Motor neuron (in vitro differentiated cells): ENCODE measurements at regions of chr17 and their contacts with region 1.

Region 1: DNA sequence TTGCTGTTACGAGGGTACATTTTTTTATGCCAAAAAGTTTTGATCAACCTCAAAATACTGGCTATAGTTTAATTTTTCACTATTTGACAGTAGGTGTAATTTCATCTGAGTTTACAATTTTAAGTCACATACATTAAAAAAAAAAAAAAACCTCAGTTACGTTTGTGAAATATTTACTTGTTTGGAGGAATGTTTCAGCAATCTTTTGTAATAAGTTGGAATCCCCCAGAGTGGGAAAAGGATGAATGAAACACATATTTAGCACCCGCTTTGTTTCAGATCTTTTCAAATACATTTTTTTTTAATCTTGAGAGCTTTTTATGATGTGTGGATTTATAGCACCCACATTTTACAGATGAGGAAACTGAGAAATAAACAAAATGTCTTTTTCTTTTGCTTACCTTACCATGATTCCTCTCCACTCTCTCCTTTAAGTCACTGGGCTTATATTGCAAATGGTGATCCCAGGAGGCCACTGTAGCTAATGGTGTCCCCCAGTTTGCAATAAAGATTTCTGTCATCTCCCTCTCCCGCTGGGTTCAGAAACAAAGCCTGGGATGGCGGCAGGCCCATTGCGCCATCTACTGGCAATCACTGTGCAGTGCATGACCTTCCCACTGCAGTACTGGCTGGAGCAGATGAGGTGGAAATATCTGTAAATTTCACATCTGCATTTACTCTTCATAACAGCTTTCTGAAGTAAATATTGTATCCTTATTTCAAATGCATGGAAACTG is 27.7 kb downstream of the TBC1D3B start:
- ATAC-seq: peak; percentile 76 to 98 (median 94)
- H3K4me3 ChIP-seq: no peak overlapping the region
- H3K27ac ChIP-seq: no peak overlapping the region
- H3K4me1 ChIP-seq: no peaks in the 10 kb centered on the region

Region 2: DNA sequence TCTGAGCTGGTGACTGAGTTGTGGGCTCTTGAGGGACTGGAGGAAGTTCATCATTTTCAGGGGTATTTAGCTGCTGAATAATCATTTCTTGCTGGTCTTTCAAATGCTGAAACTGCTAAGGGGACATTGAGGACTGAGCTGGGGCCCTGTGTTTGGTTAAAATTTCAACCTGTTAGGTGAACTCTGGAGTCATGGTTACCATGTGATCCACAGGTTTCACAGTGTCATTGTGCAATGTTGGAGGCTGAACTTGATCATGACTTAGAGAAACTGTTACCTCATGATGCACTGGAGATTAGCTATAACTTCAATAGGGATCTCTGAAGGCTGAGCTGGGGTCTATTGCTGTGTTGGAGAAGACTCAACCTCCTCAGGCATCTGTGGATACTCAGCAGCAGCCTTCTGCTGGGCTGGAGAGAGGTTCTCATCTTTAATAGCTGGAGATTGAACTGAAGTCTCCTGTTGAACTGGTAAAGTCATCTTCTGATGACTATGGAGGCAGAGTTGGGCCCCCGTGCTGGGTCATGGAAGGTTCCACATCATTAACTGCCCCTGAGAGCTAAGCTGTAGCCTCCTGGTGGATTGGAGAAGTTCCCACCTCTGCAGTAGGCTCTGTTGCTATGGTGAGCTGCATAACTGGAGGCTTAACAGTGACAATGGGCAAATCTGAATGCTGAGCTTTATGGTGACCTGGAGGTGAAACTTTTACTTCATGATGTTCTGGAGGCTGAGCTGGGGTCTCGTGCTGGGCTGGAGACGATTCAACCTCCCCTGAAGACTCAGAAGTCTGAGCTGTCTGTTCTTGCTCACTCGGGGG is 233.4 kb before region 1 on chr17:
- in situ Hi-C with region 1: no loop called
- ATAC-seq: peak in 2 of 8 experiments; percentile 19 to 74
- H3K4me3 ChIP-seq: no peak overlapping the region
- H3K27ac ChIP-seq: no peak overlapping the region
- H3K4me1 ChIP-seq: no peaks in the 10 kb centered on the region

Region 3: DNA sequence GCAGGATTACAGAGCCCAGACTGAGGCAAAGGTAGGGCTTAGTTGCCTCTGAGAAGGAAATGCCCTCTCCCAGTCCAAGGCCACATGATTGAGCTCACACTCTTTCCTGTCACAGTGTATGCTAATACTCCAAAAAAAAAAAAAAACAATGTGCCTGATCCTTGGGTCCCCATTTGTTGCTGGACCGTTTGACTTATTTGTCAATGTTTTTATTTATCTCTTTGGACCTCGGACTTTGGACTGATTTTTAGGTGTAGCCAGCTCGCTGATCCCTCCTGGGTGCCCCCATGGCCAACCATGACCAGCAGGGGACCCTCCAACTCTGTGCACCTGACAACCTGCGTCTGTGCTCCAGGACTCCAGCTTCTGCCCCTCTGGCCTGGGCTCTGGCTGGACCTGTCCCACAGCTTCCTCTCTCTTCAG is 166.8 kb before region 1 on chr17:
- in situ Hi-C with region 1: loop called in 5 of 9 experiments (anchors 10 to 25 kb)
- ATAC-seq: peak in 1 of 8 experiments; percentile 43
- H3K4me3 ChIP-seq: no peak overlapping the region
- H3K27ac ChIP-seq: no peak overlapping the region
- H3K4me1 ChIP-seq: no peaks in the 10 kb centered on the region